Tibial artery (tissue), 4 donors: ENCODE measurements at regions of chr2 and their contacts with region 1.

Region 1: GRCh38 chr2:230712443-230713330 is at the start of gene CAB39:
- DNase-seq: peak; percentile 72 to 91
- H3K4me3 ChIP-seq: peak within 1 kb of the TSS; percentile 77 to 95
- H3K27ac ChIP-seq: peak within 1 kb of the TSS; percentile 90 to 94
- H3K4me1 ChIP-seq: peaks cover 0 to 37% (median 32%) of the 10 kb centered on the region in 4 donors
- H3K27me3 ChIP-seq: no peaks in the 10 kb centered on the region
- CTCF ChIP-seq: peak; percentile 82 to 84

Region 2: DNA sequence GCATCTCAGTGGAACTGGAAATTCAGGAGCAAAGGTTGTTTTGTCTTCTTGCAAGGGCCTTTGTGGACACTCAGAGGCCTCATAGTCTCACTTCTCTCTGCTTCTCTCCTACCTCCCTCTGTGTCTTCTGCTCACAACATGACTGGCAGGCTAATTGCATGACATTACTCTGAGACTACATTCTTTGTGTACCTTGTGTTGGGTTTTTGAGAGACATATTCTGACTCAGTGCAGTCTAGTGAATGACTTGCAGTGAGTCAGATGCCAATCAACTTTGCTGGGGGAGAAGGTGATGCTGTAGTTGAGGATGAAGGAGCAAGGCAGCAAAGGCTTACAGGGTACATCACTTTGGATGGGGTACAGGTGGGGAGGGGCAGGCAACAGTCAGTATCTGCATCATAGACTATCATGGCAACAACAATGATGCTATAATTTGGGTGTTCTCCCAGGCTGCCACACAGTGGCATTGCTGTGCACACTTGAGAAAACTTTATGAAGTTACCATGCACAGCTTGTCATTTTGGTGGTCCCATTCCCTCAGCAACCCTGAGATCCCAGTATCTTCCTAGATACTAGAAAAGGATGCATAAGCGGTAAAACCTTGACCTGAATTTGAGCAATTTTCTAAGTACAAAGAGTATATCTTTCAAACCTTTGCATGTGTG is 574.7 kb before region 1 on chr2:
- intact Hi-C with region 1: no loop called
- DNase-seq: no peak
- H3K4me3 ChIP-seq: no peak overlapping the region
- H3K27ac ChIP-seq: no peak overlapping the region
- H3K4me1 ChIP-seq: no peaks in the 10 kb centered on the region
- H3K27me3 ChIP-seq: no peaks in the 10 kb centered on the region
- CTCF ChIP-seq: no peak

Region 3: GRCh38 chr2:230589497-230590015 is 123.1 kb before region 1 on chr2:
- intact Hi-C with region 1: no loop called
- DNase-seq: no peak
- H3K4me3 ChIP-seq: no peak overlapping the region
- H3K27ac ChIP-seq: no peak overlapping the region
- H3K4me1 ChIP-seq: no peaks in the 10 kb centered on the region
- H3K27me3 ChIP-seq: peaks cover 0 to 4% of the 10 kb centered on the region in 2 donors
- CTCF ChIP-seq: no peak

Region 4: GRCh38 chr2:230758566-230759480 is 46.1 kb after region 1 on chr2:
- intact Hi-C with region 1: no loop called
- DNase-seq: no peak
- H3K4me3 ChIP-seq: no peak overlapping the region
- H3K27ac ChIP-seq: peak overlapping the region; percentile 54 to 70
- H3K4me1 ChIP-seq: peaks cover 0 to 55% (median 35%) of the 10 kb centered on the region in 4 donors
- H3K27me3 ChIP-seq: no peaks in the 10 kb centered on the region
- CTCF ChIP-seq: no peak

Region 5: GRCh38 chr2:230797515-230798495 is 85.1 kb after region 1 on chr2:
- intact Hi-C with region 1: loop called (anchors 2 kb)
- DNase-seq: no peak
- H3K4me3 ChIP-seq: no peak overlapping the region
- H3K27ac ChIP-seq: peak overlapping the region in 1 of 2 donors; percentile 60
- H3K4me1 ChIP-seq: peaks cover 3 to 56% (median 21%) of the 10 kb centered on the region in 4 donors
- H3K27me3 ChIP-seq: no peaks in the 10 kb centered on the region
- CTCF ChIP-seq: no peak